Tibial artery (tissue), 4 donors: ENCODE measurements at regions of chr12 and their contacts with region 1.

Region 1: DNA sequence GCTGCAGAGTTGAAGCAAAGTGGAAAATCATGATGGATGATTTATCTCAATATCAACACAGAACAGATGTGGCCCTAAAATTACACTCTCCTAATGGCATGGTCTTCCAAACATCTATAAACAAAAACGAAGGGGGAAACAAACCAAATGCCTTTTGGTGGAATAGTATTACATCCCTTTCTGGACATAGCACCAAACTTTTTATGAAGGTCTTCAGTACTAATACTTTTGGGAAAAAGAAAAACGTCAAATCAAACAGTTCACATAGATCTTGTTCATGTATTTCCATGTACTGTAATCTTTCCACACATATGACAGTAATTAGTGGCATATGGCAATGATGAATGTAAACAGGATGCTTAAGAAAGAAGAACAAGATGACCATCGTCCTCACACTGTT is 22.9 kb upstream of the ANAPC7 start:
- DNase-seq: no peak
- H3K4me3 ChIP-seq: no peak overlapping the region
- H3K27ac ChIP-seq: no peak overlapping the region
- H3K4me1 ChIP-seq: peaks cover 0 to 4% (median 0%) of the 10 kb centered on the region in 4 donors
- H3K27me3 ChIP-seq: no peaks in the 10 kb centered on the region
- CTCF ChIP-seq: no peak

Region 2: GRCh38 chr12:110093631-110094311 is 332.6 kb before region 1 on chr12:
- intact Hi-C with region 1: loop called (anchors 5 kb)
- DNase-seq: no peak
- H3K4me3 ChIP-seq: no peak overlapping the region
- H3K27ac ChIP-seq: no peak overlapping the region
- H3K4me1 ChIP-seq: no peaks in the 10 kb centered on the region
- H3K27me3 ChIP-seq: peaks cover 0 to 2% of the 10 kb centered on the region in 2 donors
- CTCF ChIP-seq: no peak

Region 3: DNA sequence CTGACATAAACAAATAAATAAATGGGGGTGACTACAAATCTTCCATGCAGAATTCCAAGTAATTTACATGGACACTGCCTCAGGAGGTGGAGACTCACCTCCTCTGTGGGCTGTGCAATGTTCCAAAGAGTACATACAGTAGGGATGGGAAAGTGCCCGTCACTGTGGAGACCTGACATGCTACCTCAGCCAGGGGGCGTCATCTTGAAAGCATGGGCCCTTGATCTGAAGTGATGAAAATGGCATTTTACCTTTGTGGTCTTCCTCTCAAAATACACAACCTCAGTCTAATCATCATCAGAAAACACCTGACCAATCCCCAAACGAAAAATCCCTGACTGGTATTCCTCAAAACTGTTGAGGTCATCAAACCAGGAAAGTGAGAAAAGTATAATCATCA is 71.3 kb before region 1 on chr12:
- intact Hi-C with region 1: loop called (anchors 10 kb)
- DNase-seq: no peak
- H3K4me3 ChIP-seq: no peak overlapping the region
- H3K27ac ChIP-seq: no peak overlapping the region
- H3K4me1 ChIP-seq: peaks cover 0 to 2% (median 0%) of the 10 kb centered on the region in 4 donors
- H3K27me3 ChIP-seq: no peaks in the 10 kb centered on the region
- CTCF ChIP-seq: peak; percentile 21